Left ventricle myocardium superior (tissue), 1 donor: ENCODE measurements at regions of chr7 and their contacts with region 1.

Region 1: GRCh38 chr7:28853834-28854749 is 104.0 kb downstream of the TRIL start:
- DNase-seq: peak; percentile 90
- ATAC-seq: peak; percentile 99

Region 2: DNA sequence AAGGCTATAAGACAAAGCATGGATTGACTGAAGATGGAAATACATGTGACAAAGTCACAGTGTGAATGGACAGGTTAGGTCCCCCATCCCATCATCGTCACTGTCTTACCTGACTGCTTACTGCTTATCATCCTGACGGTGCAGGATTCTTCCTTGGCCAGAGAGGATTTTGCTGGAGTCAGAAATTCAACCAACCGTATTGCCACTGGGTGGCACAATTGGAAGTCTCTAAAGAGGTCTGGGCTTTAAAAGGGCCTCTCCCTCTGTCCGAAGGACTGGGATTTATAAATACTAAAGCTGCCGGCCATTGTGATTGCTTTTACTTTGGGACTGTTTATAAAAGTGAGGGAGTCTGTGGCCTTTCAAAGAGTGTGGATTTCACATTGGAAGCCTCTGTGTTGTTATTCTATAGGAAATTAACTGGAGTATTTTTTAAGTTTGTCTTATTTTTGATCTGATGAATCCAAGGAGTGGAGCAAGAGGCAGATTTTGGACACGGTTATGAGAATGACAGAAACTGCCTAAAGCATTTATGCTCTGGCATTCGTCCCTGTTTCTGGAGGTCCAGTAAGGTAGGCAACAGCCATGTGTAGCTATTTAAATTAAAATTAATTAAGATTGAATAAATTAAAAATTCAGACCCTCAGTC is 555.1 kb before region 1 on chr7:
- intact Hi-C with region 1: loop called (anchors 10 kb)
- DNase-seq: no peak
- ATAC-seq: peak; percentile 84

Region 3: DNA sequence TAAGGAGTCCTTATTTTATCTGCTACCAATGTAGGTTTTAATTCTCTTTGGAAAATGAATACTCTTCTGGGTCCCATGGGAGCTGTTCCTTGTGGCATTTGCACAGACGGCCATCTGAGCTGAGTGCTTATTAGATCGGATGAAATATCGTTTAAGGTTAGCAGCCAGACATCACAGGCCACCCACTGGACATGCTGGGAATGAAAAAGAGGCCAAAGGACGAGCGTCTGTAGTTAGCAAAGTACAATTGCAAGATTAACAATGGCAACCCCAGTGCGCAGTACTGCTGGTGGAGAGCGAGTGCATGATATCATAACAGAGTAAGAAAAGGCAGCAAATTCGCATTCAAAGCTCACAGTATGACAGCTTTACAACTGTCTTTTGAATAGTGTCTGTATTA is 470.1 kb before region 1 on chr7:
- intact Hi-C with region 1: loop called (anchors 5 kb)
- DNase-seq: no peak
- ATAC-seq: no peak

Region 4: GRCh38 chr7:28626624-28627262 is 227.3 kb before region 1 on chr7:
- intact Hi-C with region 1: loop called (anchors 10 kb)
- DNase-seq: peak; percentile 37
- ATAC-seq: peak; percentile 22

Region 5: GRCh38 chr7:28808796-28809527 is 45.1 kb before region 1 on chr7:
- intact Hi-C with region 1: no loop called
- DNase-seq: peak; percentile 38
- ATAC-seq: no peak

Region 6: DNA sequence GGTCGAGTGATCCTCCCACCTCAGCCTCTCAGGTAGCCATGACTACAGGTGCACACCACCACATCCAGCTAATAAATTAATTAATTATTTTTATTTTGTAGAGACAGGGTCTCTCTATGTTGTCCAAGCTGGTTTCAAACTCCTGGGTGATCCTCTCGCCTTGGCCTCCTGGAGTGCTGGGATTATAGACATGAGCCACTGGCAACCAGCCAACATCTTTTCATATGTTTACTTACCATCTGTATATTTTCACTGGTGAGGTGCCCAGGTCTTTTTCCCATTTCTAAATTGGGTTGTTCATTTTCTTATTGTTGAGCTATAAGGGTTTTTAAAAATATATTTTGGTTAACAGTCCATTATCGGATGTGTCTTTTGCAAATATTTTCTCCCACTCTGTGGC is 203.0 kb after region 1 on chr7:
- intact Hi-C with region 1: no loop called
- DNase-seq: no peak
- ATAC-seq: no peak